ENCODE measurements at regions of chr17 and their contacts with region 1.

Region 1: DNA sequence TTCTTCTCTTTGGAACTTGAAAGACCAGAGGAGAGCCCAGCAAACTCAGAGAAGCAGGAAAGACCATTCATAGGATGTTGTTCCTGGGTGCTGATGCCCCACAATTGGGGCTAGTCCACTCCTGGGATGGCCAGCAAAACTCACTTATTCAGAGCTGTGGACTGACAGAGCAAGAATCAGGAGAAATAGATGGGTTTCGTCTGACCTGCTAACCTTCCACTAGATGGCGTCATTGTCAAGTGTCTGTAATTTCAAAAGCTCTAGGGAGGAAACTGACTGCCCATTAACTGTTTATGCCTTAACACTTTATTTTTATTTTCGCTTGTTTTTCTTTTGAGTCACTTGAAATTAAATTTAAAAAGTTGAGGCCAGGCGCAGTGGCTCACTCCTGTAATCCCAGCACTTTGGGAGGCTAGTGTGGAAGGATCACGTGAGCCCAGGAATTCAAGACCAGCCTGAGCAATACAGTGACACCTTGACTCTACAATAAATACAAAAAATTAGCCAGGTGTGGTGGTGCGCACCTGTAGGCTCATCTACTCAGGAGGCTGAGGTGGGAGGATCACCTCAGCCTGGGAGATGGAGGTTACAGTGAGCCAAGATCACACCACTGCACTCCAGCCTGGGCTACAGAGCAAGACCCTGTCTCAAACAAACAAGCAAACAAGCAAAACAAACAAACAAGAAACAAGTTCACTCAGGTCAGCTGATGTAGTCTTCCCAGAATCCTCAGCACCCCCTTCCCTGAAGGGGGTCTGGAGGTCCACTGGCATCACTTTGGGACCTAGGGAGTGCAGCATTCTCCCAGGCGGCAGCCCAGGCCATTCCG is 28.6 kb upstream of the MILR1 start:
- DNase-seq: no peak
- H3K4me3 Mint-ChIP-seq: no peak overlapping the region
- H3K27ac Mint-ChIP-seq: no peak overlapping the region
- H3K4me1 Mint-ChIP-seq: no peaks in the 10 kb centered on the region
- H3K27me3 Mint-ChIP-seq: no peaks in the 10 kb centered on the region

Region 2: DNA sequence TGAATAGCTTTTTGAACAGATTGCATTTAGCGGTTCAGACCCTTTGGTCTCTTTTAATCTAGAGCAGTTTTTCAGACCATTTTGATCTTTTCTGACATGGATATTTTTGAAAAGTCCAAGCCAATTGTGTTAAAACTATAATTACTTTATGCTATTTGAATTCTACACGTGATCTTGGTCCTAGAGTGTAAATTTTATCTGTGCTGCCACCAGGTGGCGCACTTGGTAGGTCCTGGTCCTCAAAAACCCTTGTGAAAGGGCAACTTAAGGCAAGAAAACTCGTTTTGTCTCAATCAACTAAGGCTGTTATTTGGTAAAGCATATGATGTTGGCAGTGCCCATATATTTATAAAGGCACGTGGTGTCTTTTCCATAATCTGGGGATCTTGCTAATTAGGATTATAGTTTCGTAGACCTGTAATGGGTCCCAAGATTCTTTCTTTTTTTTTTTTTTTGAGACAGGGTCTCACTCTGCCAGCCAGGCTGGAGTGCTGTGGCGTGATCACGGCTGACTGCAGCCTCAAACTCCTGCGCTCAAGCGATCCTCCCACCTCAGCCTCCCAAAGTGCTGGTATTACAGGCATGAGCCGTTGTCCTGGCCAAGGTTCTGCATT is 113.4 kb before region 1 on chr17:
- CTCF ChIA-PET with region 1: interaction called, 93 read pairs
- POLR2A ChIA-PET with region 1: no interaction called
- intact Hi-C with region 1: loop called (anchors 1 kb)
- DNase-seq: peak; percentile 75
- H3K4me3 Mint-ChIP-seq: no peak overlapping the region
- H3K27ac Mint-ChIP-seq: no peak overlapping the region
- H3K4me1 Mint-ChIP-seq: peaks cover 3% of the 10 kb centered on the region
- H3K27me3 Mint-ChIP-seq: no peaks in the 10 kb centered on the region

Region 3: DNA sequence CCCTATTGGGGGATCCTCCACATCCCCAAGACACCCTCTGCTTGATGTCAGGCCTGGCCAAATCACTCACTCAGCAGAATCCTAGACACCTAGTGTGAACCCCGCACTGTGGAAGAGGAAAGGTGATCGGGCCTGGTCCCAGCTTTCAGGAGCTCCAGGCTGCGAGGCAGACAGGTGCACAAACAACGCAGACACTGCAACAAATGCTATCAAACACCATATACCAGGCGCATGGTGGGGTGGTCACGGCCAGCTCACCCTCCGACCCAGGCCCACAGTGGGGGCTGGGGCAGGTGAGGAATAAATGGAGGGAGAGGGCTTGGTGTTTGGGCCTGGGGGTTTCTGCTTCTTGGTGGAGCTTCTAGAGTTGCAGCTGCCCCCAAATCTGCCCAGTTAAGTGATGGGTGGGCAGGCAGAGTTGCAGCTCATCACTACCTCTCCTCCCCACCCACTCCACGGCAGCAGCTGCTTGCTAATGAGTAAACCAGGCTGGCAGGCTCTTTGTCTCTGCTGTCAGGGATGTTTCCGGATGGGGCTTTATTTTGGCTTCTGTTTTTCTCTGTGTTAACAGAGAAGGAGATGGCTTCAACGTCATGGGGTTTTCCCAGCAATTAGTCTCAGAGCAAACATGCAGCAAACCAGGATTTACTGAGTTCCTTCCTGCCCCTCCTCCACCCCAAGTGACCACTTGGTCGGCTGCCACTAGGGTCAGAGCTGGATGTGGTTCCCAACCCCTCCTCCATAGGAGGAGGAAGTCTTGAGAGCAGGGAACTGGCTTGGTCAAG is 76.3 kb before region 1 on chr17:
- CTCF ChIA-PET with region 1: interaction called, 13 read pairs
- POLR2A ChIA-PET with region 1: no interaction called
- intact Hi-C with region 1: no loop called
- DNase-seq: peak; percentile 48
- H3K4me3 Mint-ChIP-seq: no peak overlapping the region
- H3K27ac Mint-ChIP-seq: peak overlapping the region; percentile 1
- H3K4me1 Mint-ChIP-seq: peaks cover 24% of the 10 kb centered on the region
- H3K27me3 Mint-ChIP-seq: no peaks in the 10 kb centered on the region

Region 4: DNA sequence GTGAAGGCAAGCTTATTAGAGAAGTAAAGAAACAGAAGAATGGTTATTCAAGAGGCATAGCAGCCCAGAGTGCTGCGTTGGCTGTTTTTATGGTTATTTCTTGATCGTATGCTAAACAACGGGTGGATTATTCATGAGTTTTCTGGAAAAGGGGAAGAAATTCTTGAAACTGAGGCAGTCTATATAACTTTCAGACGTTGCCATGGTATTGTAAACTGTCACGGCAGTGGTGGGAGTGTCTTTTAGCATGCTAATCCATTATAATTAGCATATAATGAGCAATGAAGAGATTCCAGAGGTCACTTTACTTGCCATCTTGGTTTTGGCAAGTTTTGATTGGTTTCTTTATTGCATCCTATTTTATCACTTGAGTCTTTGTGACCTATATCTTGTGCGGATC is 11.2 kb after region 1 on chr17:
- CTCF ChIA-PET with region 1: interaction called, 35 read pairs
- POLR2A ChIA-PET with region 1: no interaction called
- intact Hi-C with region 1: no loop called
- DNase-seq: no peak
- H3K4me3 Mint-ChIP-seq: no peak overlapping the region
- H3K27ac Mint-ChIP-seq: no peak overlapping the region
- H3K4me1 Mint-ChIP-seq: no peaks in the 10 kb centered on the region
- H3K27me3 Mint-ChIP-seq: no peaks in the 10 kb centered on the region

Region 5: GRCh38 chr17:64491034-64491859 is 70.9 kb after region 1 on chr17:
- CTCF ChIA-PET with region 1: interaction called, 192 read pairs
- POLR2A ChIA-PET with region 1: no interaction called
- intact Hi-C with region 1: loop called (anchors 1 kb)
- DNase-seq: peak; percentile 70
- H3K4me3 Mint-ChIP-seq: no peak overlapping the region
- H3K27ac Mint-ChIP-seq: no peak overlapping the region
- H3K4me1 Mint-ChIP-seq: peaks cover 34% of the 10 kb centered on the region
- H3K27me3 Mint-ChIP-seq: no peaks in the 10 kb centered on the region

Region 6: DNA sequence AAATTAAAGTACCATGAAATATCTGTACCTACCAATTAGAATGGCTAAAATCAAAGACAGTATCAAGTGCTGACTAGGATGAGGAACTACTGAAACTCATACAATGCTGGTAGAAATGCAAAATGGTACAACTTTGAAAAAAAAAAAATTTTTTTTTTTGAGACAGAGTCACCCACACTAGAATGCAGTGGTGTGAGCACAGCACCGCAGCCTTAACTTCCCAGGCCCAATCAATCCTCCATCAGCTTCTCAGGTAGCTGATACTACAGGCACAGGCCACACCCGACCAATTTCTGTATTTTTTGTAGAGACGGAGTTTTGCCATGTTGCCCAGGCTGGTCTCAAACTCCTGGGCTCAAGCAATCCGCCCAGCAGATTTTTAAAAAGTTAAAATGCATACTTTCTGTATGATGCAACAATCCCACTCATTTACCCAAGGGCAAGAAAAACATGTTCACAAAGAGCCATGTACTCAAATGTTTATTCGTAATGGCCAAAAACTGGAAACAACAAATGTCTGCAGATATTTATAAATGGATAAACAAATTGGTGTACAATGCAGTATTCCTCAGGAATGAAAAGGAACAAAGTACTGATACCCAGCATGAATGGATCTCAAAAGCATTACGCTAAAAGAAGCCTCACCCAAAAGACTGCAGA is 233.1 kb after region 1 on chr17:
- CTCF ChIA-PET with region 1: interaction called, 94 read pairs
- POLR2A ChIA-PET with region 1: no interaction called
- intact Hi-C with region 1: loop called (anchors 1 kb)
- DNase-seq: no peak
- H3K4me3 Mint-ChIP-seq: no peak overlapping the region
- H3K27ac Mint-ChIP-seq: no peak overlapping the region
- H3K4me1 Mint-ChIP-seq: peaks cover 40% of the 10 kb centered on the region
- H3K27me3 Mint-ChIP-seq: no peaks in the 10 kb centered on the region